ENCODE measurements at regions of chr1 and their contacts with region 1.

Region 1: DNA sequence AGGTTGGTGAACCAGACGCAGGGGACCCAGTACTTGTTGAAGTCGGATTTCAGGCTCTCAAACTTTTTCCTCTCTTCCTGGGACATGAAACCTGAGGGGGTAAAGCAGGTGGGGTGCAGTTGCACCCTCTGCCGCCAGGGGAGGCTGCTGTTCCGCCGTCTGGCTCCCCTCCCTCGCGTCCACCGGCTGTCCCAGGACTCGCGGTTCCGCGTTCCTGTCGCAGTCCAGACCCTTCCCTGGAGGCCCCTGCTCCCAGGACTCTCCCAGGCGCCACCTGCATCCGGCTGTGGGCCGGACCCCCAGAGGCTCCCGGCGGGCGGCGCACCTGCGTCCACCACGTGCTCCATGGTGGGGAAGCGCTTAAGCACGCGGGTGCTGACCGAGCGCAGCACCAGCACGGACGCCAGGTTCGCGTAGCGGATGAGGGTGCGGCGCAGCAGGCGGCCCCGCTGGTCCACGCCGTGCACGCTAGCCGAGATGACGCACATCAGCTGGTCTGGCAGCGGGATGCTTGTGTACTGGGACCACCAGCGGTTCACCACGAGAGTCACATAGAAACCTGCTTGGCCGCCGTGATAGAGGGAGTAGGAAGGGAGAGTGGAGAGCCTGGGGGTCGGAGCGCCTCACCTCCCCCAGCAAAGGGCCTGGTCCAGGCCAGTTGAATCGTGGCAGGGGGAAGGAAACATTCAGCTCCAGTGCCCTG is 1.7 kb downstream of the BEST4 start:
- DNase-seq: peak; percentile 72
- H3K4me3 Mint-ChIP-seq: peak overlapping the region; percentile 72
- H3K27ac Mint-ChIP-seq: peak overlapping the region; percentile 80
- H3K4me1 Mint-ChIP-seq: peaks cover 29% of the 10 kb centered on the region
- H3K27me3 Mint-ChIP-seq: no peaks in the 10 kb centered on the region

Region 2: DNA sequence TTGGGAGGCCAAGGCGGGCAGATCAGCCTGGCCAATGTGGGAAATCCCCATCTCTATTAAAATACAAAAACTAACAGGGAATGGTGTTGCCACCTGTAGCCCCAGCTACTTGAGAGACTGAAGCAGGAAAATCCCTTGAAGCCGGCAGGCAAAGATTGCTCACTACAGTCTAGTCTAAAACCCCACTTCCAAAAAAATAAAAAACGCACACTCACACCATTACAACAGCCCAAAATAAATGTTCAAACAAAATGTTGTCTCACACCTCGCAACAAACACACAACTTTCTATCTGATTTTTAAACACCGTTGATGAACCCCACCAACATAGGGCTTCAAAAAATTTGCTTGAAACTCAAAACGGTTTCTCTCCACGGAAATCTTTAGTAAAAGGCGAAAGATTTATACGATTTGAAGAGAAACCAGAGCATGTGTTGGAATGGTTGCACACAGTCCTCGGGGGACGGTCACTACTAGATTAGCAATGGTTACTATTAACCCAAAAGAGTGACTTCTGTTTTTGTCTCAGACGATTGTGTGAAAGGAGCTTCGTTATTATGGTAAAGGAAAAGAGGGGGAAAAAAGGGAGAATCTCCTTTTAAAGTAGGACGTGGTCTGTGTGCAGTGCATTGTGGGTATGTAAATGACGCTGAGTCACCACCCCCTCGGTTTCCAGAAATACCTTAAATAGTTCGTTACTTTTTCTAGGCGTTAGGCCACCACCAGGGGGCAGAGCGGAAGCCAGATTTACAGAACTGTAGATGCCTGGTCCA is 55.4 kb before region 1 on chr1 and contains the start of gene RNU5D-1:
- intact Hi-C with region 1: no loop called
- DNase-seq: peak; percentile 88
- H3K4me3 Mint-ChIP-seq: peak within 1 kb of the TSS; percentile 70
- H3K27ac Mint-ChIP-seq: peak within 1 kb of the TSS; percentile 100
- H3K4me1 Mint-ChIP-seq: peaks cover 33% of the 10 kb centered on the region
- H3K27me3 Mint-ChIP-seq: no peaks in the 10 kb centered on the region
- total RNA-seq, gene RNU5D-1: not detected in 2 replicates

Region 3: DNA sequence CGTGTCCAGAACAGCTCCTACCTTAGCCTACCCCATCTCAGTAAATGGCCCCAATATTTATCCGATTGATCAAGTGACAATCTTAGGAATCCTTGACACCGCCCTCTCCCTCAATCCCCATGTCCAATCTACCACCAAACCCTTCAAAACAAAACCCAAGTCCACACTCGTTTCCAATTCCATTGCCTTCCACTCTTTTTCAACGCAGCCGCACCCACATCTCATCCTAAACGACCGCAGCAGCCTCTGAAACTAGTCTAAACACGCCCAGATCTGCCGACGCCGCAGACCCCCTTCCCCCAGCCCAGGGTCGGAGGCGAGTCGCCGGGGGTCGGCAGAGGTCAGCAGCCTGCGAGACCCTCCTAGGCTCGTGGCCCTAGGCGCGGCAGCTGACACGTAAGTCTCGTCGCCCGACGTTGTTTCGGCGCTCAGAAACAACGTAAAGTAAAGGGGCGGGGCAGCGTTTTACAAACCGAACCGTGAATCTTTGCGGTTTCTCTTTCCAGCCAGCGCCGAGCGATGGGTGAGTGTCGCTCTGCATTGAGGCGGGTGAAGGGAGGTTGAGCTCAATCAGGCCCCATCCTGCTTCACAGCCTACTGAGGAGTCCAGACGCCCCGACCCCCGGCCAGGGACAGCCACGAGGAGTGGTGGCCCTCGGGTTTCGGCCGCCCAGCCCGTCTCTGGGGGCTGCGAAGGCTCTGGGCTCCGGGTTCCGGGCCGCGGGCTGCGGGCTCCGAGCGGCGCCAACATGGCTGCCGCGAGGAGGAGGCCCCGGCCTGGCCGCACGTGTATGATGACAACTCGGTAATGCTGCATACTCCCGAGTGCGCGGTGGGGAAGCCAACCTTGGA is 11.0 kb before region 1 on chr1 and contains the start of gene RPS8:
- intact Hi-C with region 1: loop called (anchors 1 kb)
- DNase-seq: peak; percentile 86
- H3K4me3 Mint-ChIP-seq: peak within 1 kb of the TSS; percentile 88
- H3K27ac Mint-ChIP-seq: peak within 1 kb of the TSS; percentile 93
- H3K4me1 Mint-ChIP-seq: peaks cover 24% of the 10 kb centered on the region
- H3K27me3 Mint-ChIP-seq: no peaks in the 10 kb centered on the region
- total RNA-seq, gene RPS8: 2,328 and 2,356 TPM in 2 replicates

Region 4: GRCh38 chr1:44799770-44800584 is 13.7 kb after region 1 on chr1 and contains the start of gene PLK3:
- intact Hi-C with region 1: loop called (anchors 2 kb)
- DNase-seq: peak; percentile 97
- H3K4me3 Mint-ChIP-seq: peak within 1 kb of the TSS; percentile 97
- H3K27ac Mint-ChIP-seq: peak within 1 kb of the TSS; percentile 99
- H3K4me1 Mint-ChIP-seq: peaks cover 23% of the 10 kb centered on the region
- H3K27me3 Mint-ChIP-seq: no peaks in the 10 kb centered on the region
- total RNA-seq, gene PLK3: 128 and 135 TPM in 2 replicates

Region 5: DNA sequence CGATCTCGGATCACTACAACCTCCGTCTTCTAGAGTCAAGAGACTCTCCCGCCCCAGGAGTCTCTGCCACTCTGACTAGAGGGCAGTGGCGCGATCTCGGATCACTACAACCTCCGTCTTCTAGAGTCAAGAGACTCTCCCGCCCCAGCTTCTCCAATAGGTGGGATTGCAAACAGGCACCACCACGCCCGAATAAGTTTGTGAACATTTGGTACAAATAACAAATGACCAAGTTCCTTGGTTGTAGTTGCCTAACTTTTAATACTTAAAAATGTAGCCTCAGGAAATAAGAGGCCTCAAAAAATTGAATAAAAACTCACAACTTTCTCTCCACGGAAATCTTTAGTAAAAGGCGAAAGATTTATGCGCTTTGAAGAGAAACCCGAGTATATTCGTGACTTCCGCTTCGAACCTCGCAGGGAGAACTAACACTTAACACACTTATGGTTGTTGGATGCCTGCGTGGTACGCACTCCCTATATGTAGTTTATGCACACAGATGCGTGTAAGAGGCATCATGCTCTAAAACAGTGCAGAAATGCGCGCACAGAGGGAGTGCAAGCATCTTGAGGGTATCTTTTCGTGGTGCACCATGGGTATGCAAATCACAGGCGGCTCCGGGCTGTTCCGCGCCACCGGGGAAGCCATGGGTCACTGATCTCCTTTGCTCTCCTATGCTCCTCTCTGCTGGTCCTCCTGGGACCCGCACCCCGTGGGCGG is 33.5 kb after region 1 on chr1:
- intact Hi-C with region 1: loop called (anchors 5 kb)
- DNase-seq: peak; percentile 84
- H3K4me3 Mint-ChIP-seq: peak overlapping the region; percentile 88
- H3K27ac Mint-ChIP-seq: peak overlapping the region; percentile 98
- H3K4me1 Mint-ChIP-seq: peaks cover 35% of the 10 kb centered on the region
- H3K27me3 Mint-ChIP-seq: no peaks in the 10 kb centered on the region

Measured in activated T-helper 2 cell treated with anti-CD3 and anti-CD28 coated beads, Interferon-gamma antibody, Interleukin-2, Interleukin-4, amounts not matched to agents 10 μg/mL and 5 μg/mL and 100 μg/mL, durations not matched to agents 14 hours and 24 hours and 36 hours (primary cell).